Activated T-helper 1 cell treated with anti-CD3 and anti-CD28 coated beads, Interleukin-12 subunit alpha, Interleukin-12 subunit beta, Interleukin-2, Interleukin-4 antibody, amounts not matched to agents 30 ng/mL and 10 ng/mL and 1 ng/mL, durations not matched to agents 14 hours and 24 hours and 36 hours (primary cell): ENCODE measurements at regions of chr17 and their contacts with region 1.

Region 1: DNA sequence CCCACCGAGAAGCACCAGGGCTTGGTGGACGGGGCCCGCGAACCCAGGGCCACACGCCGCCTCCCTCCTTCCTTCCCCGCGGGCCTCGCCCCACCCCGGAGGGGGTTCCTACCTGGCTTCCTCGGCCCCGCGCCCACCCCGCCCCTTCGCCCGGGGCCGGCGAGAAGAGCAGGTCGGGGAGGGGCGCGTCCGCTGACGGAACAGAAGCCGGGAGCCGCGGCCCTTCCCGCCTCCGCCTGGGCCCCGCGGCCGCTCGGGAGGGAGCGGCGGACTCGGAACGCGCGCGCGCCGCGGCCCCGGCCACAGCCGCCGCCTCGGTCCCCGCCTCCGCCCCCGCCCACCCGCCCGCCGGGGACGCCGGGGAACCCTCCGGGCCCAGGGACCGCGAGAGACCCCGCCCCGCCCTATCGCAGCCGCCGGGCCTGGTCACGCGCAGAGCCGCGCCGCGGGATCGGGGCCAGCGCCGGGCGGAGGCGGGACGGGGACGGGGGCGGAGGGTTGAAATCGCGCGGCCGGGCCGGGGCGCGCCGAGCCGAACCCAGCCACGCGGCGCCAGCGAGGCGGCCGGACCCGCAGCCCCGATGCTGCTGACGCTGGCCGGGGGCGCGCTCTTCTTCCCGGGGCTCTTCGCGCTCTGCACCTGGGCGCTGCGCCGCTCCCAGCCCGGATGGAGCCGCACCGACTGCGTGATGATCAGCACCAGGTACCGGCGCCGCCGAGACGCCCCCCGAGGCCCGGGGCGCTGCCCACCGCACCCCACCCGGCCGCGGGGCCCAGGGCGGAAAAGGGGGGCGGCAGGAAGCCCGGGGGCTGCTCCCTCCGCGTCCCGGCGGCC is at the start of gene TLCD3A:
- DNase-seq: peak; percentile 61
- H3K4me3 Mint-ChIP-seq: peak within 1 kb of the TSS; percentile 90
- H3K27ac Mint-ChIP-seq: peak within 1 kb of the TSS; percentile 95
- H3K4me1 Mint-ChIP-seq: peaks cover 28% of the 10 kb centered on the region
- H3K27me3 Mint-ChIP-seq: peaks cover 6% of the 10 kb centered on the region
- total RNA-seq, gene TLCD3A: 36.3 and 36.8 TPM in 2 replicates

Region 2: DNA sequence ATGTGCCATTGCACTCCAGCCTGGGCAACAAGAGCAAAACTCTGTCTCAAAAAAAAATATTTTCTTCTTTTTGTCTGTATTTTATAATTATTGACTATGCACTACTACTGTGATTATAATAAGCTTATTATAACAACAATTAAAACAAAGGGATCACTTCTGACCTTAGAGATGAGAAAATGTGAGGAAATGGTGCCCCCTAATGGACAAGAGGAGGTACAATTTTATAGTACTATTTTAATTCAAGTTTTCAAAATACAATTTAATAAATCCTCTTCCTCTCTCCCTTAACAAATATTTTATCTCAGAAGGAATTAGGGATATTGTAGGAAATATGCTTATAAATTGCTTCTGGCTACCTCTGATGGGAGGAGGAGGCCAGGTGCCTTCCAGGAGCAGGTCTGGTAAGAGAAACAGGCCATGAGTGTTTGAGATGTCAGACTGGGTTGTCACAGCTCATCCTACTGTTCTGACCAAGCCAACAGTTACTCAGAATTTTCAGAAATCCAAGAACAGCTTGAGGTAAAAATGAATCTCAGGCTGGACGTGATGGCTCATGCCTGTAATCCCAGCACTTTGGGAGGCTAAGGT is 31.7 kb before region 1 on chr17:
- intact Hi-C with region 1: no loop called
- DNase-seq: no peak
- H3K4me3 Mint-ChIP-seq: no peak overlapping the region
- H3K27ac Mint-ChIP-seq: no peak overlapping the region
- H3K4me1 Mint-ChIP-seq: no peaks in the 10 kb centered on the region
- H3K27me3 Mint-ChIP-seq: no peaks in the 10 kb centered on the region

Region 3: DNA sequence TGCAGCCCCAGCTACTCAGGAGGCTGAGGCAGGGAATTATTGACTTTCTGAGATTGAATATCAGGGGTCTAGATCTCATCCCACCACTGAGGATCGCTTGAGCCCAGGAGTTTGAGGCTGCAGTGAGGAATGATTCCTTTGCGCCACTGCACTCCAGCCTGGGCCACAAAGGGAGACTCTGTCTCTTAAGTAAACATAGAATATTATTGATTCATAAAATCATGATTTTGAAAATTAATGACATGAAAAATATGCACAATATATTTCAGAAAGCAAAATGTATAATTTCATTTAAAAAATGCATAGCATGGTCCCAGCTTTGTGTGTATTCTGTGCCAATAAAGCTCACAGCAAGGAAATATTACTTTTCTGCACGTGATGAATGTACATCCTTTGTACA is 16.0 kb before region 1 on chr17:
- intact Hi-C with region 1: loop called (anchors 1 kb)
- DNase-seq: no peak
- H3K4me3 Mint-ChIP-seq: peak overlapping the region; percentile 26
- H3K27ac Mint-ChIP-seq: no peak overlapping the region
- H3K4me1 Mint-ChIP-seq: peaks cover 13% of the 10 kb centered on the region
- H3K27me3 Mint-ChIP-seq: peaks cover 8% of the 10 kb centered on the region

Region 4: GRCh38 chr17:781805-782731 is 49.8 kb after region 1 on chr17 and contains the starts of genes GLOD4 and MRM3:
- intact Hi-C with region 1: loop called (anchors 1 kb)
- DNase-seq: peak; percentile 94
- H3K4me3 Mint-ChIP-seq: peak within 1 kb of the TSS; percentile 97
- H3K27ac Mint-ChIP-seq: peak within 1 kb of the TSS; percentile 97
- H3K4me1 Mint-ChIP-seq: peaks cover 37% of the 10 kb centered on the region
- H3K27me3 Mint-ChIP-seq: no peaks in the 10 kb centered on the region
- total RNA-seq, gene GLOD4: 97.0 and 97.6 TPM in 2 replicates
- total RNA-seq, gene MRM3: 31.7 and 32.0 TPM in 2 replicates

Region 5: DNA sequence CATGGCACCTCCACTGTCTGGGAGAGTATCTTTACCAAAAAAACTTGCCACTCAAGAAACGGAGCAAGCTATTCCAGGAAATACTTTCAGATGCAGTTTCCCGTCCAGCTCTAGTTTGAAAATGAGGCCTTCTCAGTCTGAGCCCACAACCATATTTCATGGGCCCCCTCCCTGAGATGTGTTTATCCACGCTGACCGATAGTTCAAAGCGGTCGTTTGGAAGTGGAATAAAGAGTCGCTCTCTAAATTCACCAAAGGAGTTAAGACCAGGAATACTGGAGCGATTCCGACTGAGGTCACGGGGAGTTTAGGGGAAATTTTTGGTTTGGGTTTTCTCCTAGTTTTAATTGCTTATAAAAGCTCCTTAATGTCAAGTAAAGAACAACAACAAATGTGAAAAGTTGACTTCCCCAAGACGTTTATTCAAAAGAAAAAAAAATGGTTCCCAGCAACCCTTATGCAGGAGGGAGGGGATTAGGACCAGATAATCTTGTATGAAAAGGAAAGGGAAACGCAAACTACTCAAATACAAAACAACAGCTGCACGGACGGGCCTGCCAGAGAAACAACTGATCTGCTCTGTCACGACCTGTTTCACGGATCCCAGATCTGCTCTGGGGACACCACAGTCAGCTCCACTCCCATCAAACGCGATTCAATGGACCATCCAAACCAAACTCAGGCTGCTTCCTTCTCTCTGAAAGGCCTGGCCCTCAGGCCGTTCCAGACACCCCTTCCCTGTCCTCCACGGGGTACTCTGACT is 127.0 kb after region 1 on chr17:
- intact Hi-C with region 1: no loop called
- DNase-seq: no peak
- H3K4me3 Mint-ChIP-seq: no peak overlapping the region
- H3K27ac Mint-ChIP-seq: no peak overlapping the region
- H3K4me1 Mint-ChIP-seq: no peaks in the 10 kb centered on the region
- H3K27me3 Mint-ChIP-seq: peaks cover 4% of the 10 kb centered on the region